HCT116 (cell line): ENCODE measurements at regions of chr16 and their contacts with region 1.

Region 1: DNA sequence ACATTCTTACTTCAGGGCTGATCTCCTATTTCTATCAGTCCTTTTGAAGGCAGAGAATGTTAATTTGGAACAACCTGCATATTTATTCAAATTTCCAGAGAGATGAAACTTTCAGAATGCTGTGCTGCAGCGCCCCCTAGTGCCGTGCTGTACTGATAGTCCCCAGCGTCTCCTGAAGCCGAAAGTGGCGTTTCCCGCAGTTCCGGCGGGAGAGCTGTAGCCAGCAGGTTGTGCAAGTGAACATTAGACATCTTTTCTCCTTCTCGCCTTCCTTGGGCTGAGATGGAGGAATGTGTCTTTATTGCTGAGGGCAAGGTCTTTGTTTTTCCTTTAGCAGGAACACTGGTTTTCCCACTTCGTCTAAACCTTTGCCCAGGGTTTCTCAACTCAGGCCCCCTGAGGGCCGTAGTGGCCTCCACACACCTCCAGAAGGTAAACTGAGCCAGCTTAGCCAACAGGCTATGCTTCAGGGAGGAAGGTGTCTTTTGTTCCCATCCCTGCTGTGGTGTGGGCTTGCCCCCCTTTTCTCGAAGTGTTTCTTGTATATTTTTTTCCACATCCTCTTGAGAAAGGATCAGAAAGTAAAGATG is 26.4 kb downstream of the USP10 start:
- DNase-seq: peak; percentile 61
- ATAC-seq: peak; percentile 82
- H3K4me3 ChIP-seq: no peak overlapping the region
- H3K27ac ChIP-seq: peak overlapping the region; percentile 21
- H3K4me1 ChIP-seq: peaks cover 40 to 65% of the 10 kb centered on the region in 2 experiments
- H3K27me3 ChIP-seq: no peaks in the 10 kb centered on the region
- CTCF ChIP-seq: peak; percentile 93 to 100 (median 100)
- POLR2A ChIP-seq: no peak
- RAD21 ChIP-seq: peak; percentile 95

Region 2: DNA sequence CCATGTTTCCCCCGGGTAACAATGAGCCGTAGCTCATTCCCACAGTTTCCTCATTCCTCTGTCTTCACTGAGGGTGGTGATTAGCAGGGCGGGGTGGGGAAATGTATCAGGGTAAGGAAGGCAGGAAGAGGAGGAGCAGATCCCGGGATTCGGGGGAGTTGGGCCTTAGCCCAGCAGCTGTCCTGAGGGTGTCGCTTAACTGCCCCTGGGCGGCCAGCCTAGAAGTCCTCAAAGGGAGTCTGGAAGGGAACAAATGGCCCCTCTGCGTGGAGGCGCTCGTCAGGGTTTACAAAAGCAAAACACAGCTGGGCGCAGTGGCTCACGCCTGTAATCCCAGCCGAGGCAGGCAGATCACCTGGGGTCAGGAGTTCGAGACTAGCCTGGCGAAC is 812.9 kb before region 1 on chr16:
- CTCF ChIA-PET with region 1: no interaction called
- POLR2A ChIA-PET with region 1: no interaction called
- RAD21 ChIA-PET with region 1: no interaction called
- intact Hi-C with region 1: no loop called
- DNase-seq: no peak
- ATAC-seq: no peak
- H3K4me3 ChIP-seq: no peak overlapping the region
- H3K27ac ChIP-seq: no peak overlapping the region
- H3K4me1 ChIP-seq: peaks cover 0 to 16% of the 10 kb centered on the region in 2 experiments; a peak in 1 of 4 replicates
- H3K27me3 ChIP-seq: no peaks in the 10 kb centered on the region
- CTCF ChIP-seq: no peak
- POLR2A ChIP-seq: no peak
- RAD21 ChIP-seq: no peak

Region 3: DNA sequence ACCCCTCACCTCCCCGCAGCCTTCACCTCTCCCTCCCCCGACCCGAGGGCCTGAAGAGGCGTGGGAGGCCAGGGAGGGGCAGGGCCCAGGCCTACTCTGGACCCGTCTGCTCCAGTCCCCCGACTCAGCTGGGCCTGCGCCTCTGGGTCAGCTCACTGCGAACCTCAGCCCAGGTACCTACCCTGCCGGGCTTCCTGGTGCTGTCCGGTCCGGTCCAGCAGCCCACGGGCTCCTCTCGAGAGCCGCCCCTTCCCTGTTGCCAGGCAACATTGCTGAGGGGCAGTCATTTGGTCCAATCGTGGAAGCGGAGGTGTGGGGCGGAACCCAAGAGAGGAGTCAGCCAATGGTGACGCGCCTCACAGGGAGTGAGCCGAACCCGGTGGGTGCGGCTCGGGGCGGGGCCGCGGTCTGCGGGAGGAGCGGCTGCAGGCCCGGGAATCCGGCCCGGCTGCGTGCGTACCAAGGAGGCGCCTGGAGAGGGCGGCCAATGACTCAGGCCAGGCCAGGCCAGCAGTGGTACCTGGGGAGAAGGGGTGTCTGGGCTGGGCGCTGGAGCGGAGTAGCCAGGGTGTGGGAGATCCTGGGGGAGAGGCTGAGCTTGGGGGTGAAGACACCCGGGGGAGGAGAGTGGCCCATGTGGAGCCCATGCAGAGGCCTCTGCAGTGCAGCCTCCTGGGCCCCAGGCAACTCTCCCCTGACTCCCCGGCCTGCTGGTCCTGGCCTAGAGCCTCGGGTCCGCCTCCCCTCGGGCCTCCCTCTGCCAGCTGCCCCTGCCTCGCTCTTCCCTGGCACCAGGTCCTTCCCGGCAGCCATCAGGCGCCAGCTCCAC is 221.5 kb before region 1 on chr16 and contains the start of gene MEAK7:
- CTCF ChIA-PET with region 1: interaction called, 11 read pairs
- POLR2A ChIA-PET with region 1: no interaction called
- RAD21 ChIA-PET with region 1: no interaction called
- intact Hi-C with region 1: no loop called
- DNase-seq: peak; percentile 98
- ATAC-seq: peak; percentile 84
- H3K4me3 ChIP-seq: peak within 1 kb of the TSS; percentile 88 to 98
- H3K27ac ChIP-seq: peak within 1 kb of the TSS; percentile 82
- H3K4me1 ChIP-seq: peaks cover 54 to 69% of the 10 kb centered on the region in 2 experiments
- H3K27me3 ChIP-seq: no peaks in the 10 kb centered on the region
- CTCF ChIP-seq: no peak
- POLR2A ChIP-seq: peak; percentile 67
- RAD21 ChIP-seq: no peak
- total RNA-seq, gene MEAK7: 32.2 TPM

Region 4: DNA sequence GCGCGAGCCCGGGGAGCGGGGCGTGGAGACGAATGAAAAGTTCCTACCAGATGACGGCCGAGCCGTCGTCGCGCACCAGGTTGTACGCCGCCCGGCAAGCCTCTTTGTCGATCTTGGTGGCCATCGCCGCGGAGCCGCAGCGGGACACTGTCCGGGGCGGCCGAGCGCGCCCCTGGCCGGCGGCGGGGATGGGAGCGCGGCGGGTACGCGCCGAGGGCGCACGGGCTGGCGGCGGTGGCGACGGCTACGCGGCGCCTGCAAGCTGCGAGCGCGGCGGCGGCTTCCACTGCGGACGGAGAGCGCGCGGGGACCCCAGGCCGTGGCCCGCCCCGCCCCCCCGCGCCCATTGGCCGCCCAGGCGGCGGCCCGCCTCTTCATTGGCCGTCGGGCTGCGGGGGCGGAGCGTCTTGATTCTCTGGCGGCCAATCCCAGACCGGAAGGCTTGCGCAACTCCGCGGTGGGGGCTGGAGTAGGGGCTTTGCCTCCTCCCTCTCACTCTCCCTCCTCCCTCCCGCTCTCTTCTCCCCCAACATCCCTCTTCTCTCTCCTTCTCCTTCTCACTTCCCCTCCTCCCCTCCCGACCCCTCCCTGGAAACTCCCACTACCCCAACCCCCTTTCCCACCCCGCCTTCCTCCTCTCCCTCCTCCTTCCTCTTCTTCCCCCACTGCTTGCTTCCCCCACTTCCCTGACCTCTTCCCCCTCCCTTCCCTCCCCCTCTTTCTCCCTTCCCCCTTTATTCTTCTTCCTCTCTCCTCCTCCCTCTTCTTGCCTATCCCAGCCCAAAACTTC is 108.2 kb before region 1 on chr16 and contains the start of gene COTL1:
- CTCF ChIA-PET with region 1: interaction called, 47 read pairs
- POLR2A ChIA-PET with region 1: no interaction called
- RAD21 ChIA-PET with region 1: interaction called, 3 to 4 read pairs
- intact Hi-C with region 1: loop called (anchors 1 kb)
- DNase-seq: peak; percentile 96
- ATAC-seq: peak; percentile 76
- H3K4me3 ChIP-seq: peak within 1 kb of the TSS; percentile 82 to 85
- H3K27ac ChIP-seq: peak within 1 kb of the TSS; percentile 86
- H3K4me1 ChIP-seq: peaks cover 18 to 64% of the 10 kb centered on the region in 2 experiments
- H3K27me3 ChIP-seq: no peaks in the 10 kb centered on the region
- CTCF ChIP-seq: no peak
- POLR2A ChIP-seq: peak; percentile 85
- RAD21 ChIP-seq: no peak
- total RNA-seq, gene COTL1: 276 TPM

Region 5: GRCh38 chr16:84635699-84636098 is 90.5 kb before region 1 on chr16:
- CTCF ChIA-PET with region 1: no interaction called
- POLR2A ChIA-PET with region 1: no interaction called
- RAD21 ChIA-PET with region 1: no interaction called
- intact Hi-C with region 1: no loop called
- DNase-seq: no peak
- ATAC-seq: no peak
- H3K4me3 ChIP-seq: no peak overlapping the region
- H3K27ac ChIP-seq: no peak overlapping the region
- H3K4me1 ChIP-seq: no peaks in the 10 kb centered on the region
- H3K27me3 ChIP-seq: no peaks in the 10 kb centered on the region
- CTCF ChIP-seq: no peak
- POLR2A ChIP-seq: no peak
- RAD21 ChIP-seq: no peak

Region 6: DNA sequence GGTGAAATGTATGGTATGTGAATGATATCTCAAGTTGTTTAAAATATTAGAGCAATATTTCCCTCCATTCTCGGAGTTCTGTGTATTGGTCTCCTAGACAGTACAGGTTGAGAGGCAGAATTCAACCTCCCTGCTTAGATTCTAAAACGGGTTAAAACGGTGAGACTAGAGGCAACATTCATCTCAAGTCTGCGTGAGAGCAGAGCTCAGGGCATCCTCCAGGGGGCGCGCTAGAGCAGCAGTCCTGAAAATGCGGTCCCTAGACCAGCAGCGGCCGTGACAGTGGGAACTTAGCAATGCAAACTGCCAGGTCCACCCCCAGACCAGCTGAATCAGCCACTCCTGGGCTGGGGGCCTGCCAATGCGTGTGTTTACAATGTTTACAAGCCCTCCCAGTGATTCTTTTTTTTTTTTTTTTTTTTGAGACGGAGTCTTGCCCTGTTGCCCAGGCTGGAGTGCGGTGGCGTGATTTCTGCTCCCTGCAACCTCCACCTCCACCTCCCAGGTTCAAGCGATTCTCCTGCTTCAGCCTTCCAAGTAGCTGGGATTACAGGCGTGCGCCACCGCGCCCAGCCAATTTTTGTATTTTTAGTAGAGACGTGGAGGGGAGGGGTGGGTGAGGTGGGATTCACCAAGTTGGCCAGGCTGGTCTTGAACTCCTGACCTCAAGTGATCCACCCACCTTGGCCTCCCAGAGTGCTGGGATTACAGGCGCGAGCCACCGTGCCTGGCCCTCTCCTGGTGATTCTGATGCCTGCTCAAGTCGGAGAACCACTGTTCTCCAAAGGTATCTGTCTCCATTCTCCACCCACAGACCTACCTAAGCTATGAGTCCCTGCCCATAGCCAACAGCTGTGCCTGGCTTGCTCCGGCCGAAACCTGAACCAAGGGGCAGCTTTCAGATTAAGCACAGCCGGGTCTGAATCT is 53.6 kb before region 1 on chr16:
- CTCF ChIA-PET with region 1: interaction called, 30 read pairs
- POLR2A ChIA-PET with region 1: interaction called, 3 read pairs
- RAD21 ChIA-PET with region 1: interaction called, 3 to 4 read pairs
- intact Hi-C with region 1: loop called (anchors 1 kb)
- DNase-seq: peak; percentile 48
- ATAC-seq: peak; percentile 96
- H3K4me3 ChIP-seq: no peak overlapping the region
- H3K27ac ChIP-seq: no peak overlapping the region
- H3K4me1 ChIP-seq: peaks cover 0 to 5% of the 10 kb centered on the region in 2 experiments; a peak in 1 of 4 replicates
- H3K27me3 ChIP-seq: peaks cover 13% of the 10 kb centered on the region; the same call in 1 of the 2 replicates
- CTCF ChIP-seq: peak; percentile 85 to 97 (median 95)
- POLR2A ChIP-seq: no peak
- RAD21 ChIP-seq: peak; percentile 72

Region 7: DNA sequence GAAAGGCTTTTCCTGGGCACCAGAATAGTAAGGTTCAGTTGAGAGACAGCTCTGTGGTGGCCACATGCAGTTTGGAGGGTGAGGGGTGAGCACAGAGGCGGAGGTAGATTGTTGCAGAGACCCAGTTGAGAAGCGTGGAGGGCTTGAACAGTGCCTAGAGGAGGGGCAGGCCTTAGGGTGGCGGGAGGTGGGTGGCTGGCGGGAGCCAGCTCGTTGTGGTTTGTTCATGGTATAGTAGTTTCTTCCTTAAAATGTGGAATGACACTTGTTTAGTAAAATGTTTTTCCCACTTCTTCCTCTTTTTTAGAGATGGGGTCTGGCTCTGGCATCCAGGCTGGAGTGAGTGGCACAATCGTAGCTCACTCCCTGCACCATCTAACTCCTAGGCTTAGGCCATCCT is 12.1 kb before region 1 on chr16:
- CTCF ChIA-PET with region 1: interaction called, 47 read pairs
- POLR2A ChIA-PET with region 1: interaction called, 4 read pairs
- RAD21 ChIA-PET with region 1: no interaction called
- intact Hi-C with region 1: no loop called
- DNase-seq: no peak
- ATAC-seq: no peak
- H3K4me3 ChIP-seq: no peak overlapping the region
- H3K27ac ChIP-seq: no peak overlapping the region
- H3K4me1 ChIP-seq: no peaks in the 10 kb centered on the region; a peak in 1 of 4 replicates
- H3K27me3 ChIP-seq: no peaks in the 10 kb centered on the region
- CTCF ChIP-seq: no peak
- POLR2A ChIP-seq: no peak
- RAD21 ChIP-seq: no peak